Thyroid gland (tissue), 4 donors: ENCODE measurements at regions of chr10 and their contacts with region 1.

Region 1: DNA sequence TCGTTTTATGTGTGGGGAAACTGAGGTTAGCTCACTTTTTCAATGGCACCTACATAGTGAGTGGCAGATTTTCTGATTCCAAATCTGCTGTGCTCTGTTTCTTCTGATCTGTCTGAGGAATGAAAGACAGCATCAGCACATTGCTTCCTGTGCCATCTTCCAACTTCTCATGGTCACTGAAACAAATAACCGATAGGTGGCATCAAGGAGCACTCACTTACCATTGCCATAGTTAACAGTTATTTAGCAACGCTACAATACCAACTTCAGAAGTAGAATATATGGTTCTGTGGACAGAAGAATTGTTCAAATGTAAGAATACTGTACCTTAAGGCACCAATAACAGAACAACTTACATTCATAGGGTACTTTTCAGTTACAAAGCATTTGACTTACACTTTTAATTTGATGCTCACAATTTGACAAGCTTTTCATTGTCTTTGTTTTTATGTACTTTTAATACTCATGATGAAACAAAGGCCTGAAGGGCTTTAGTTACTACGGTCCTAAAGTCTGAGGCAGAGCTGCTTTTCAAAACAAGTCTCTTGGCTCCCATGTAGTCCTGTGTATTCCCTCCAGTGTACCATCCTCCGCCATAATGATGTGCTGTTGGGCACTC is 228.9 kb upstream of the TCF7L2 start:
- DNase-seq: no peak
- H3K4me3 ChIP-seq: no peak overlapping the region
- H3K27ac ChIP-seq: no peak overlapping the region
- H3K4me1 ChIP-seq: no peaks in the 10 kb centered on the region
- H3K27me3 ChIP-seq: no peaks in the 10 kb centered on the region
- CTCF ChIP-seq: peak in 4 of 6 experiments; percentile 48 to 79 (median 60)
- POLR2A ChIP-seq: no peak

Region 2: GRCh38 chr10:113126229-113127201 is 405.3 kb after region 1 on chr10:
- intact Hi-C with region 1: loop called (anchors 10 kb)
- DNase-seq: peak; percentile 74 to 78
- H3K4me3 ChIP-seq: peak overlapping the region in 1 of 3 donors; percentile 9
- H3K27ac ChIP-seq: peak overlapping the region in 1 of 3 donors; percentile 17
- H3K4me1 ChIP-seq: peaks cover 0 to 6% of the 10 kb centered on the region in 2 donors
- H3K27me3 ChIP-seq: no peaks in the 10 kb centered on the region
- CTCF ChIP-seq: peak in 5 of 6 experiments; percentile 25 to 86 (median 65)
- POLR2A ChIP-seq: no peak

Region 3: DNA sequence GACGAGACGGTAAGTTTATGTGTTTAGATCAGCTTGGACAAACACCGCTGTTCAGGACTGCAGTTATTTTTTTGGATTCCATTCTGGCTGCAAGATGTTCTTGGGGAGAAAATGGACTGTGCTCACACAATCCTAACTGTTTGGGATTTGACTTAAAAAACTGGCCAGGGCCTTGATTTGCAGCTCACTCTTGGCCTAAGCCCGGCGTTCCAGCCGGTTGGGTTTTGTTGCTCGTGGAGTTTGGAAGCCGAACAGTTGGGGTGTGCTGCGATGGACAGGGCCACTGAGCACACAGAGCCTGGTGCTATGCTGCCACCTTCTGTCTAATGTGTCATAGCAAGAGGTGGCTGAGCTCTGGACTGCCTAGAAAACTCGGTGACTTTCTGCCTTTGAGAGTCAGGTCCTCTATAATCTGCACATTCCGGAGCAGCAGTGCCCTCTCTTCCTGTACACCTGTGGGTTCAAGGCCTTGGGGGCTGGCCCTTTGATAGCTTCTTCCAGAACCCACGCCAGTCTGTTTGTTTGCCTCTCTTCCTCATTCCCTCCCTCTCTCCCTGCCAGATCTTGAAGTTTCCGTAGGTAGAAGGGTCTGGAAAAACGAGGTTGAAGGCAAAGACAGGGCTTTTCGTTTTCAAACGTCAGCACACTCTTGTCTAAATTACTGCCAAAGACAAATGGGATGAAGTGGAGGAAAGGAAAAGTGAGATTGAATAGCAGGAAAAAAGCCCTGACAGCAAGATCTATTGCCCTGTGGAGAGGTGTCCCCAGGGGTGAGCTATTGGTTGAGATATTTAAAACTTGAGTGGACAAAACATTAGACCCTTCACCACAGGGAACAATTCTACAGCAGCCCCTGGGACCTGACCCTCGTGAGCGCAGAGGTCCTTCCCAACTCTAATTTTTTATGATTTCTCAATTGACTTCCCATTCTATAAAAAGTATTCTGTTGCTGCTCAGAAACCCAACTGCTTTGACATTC is 664.1 kb after region 1 on chr10:
- intact Hi-C with region 1: loop called (anchors 10 kb)
- DNase-seq: peak; percentile 88 to 93
- H3K4me3 ChIP-seq: no peak overlapping the region
- H3K27ac ChIP-seq: peak overlapping the region in 1 of 3 donors; percentile 26
- H3K4me1 ChIP-seq: peaks cover 0 to 4% of the 10 kb centered on the region in 2 donors
- H3K27me3 ChIP-seq: no peaks in the 10 kb centered on the region
- CTCF ChIP-seq: peak; percentile 52 to 96 (median 88)
- POLR2A ChIP-seq: no peak